ENCODE measurements at regions of chr1 and their contacts with region 1.

Region 1: DNA sequence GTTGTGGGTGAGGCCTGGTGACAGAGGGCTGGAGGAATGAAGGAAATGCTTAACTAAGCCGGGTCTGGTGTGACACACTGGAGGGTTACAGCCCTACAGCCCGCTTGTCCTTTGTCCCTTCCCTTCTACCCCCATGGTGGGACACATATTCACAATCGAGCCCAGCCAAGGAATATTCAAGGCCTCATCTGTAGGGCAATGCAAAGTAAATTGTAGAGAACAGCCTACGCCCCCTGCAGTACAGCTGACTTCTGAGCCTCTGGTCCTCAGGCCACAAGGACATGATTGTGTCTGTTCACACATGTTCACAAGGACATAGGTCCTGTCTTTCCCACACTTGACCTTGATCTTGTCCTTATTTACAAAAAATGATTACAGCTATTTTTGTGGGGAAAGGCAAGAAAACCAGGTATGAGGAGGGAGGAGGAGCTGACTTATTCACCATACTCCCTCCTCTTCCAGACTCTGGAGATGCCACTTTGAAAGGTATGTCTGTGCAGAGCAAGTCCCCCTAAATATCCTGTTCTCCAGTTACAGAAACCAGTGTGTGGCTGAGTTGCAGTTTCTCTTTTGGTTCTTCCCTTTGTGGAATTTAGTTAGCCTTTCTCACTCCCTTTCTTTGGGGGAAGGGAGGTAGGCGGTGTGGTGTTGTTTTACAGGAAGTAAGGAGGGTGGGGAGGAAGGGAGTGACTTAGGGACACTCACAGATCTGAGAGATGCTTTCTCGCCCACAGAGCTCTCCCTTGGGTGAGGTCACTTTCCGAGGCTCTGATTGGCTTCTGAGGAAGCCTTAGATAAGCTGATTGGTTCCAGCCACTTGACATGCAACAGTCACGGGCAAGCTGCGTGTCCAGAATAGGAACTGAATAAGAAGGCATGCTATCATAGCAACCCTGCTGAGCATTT is 14.6 kb downstream of the POLR3GL start:
- DNase-seq: peak; percentile 31 to 87 (median 71)
- ATAC-seq: peak; percentile 89
- H3K4me3 ChIP-seq: peak overlapping the region; percentile 64
- H3K4me3 Mint-ChIP-seq: no peak overlapping the region
- H3K27ac ChIP-seq: peak overlapping the region; percentile 82
- H3K27ac Mint-ChIP-seq: no peak overlapping the region
- H3K4me1 ChIP-seq: peaks cover 67 to 68% of the 10 kb centered on the region in 2 donors
- H3K4me1 Mint-ChIP-seq: peaks cover 12 to 37% (median 16%) of the 10 kb centered on the region in 7 donors
- H3K27me3 ChIP-seq: no peaks in the 10 kb centered on the region
- H3K27me3 Mint-ChIP-seq: no peaks in the 10 kb centered on the region

Region 2: GRCh38 chr1:145740266-145740665 is 238.8 kb before region 1 on chr1:
- CTCF ChIA-PET with region 1: no interaction called
- POLR2A ChIA-PET with region 1: no interaction called
- intact Hi-C with region 1: no loop called
- DNase-seq: no peak
- ATAC-seq: no peak
- H3K4me3 ChIP-seq: no peak overlapping the region
- H3K4me3 Mint-ChIP-seq: no peak overlapping the region
- H3K27ac ChIP-seq: no peak overlapping the region
- H3K27ac Mint-ChIP-seq: no peak overlapping the region
- H3K4me1 ChIP-seq: no peaks in the 10 kb centered on the region
- H3K4me1 Mint-ChIP-seq: no peaks in the 10 kb centered on the region
- H3K27me3 ChIP-seq: no peaks in the 10 kb centered on the region
- H3K27me3 Mint-ChIP-seq: no peaks in the 10 kb centered on the region

Region 3: GRCh38 chr1:145906954-145907753 is 72.0 kb before region 1 on chr1:
- CTCF ChIA-PET with region 1: no interaction called
- POLR2A ChIA-PET with region 1: no interaction called
- intact Hi-C with region 1: no loop called
- DNase-seq: no peak
- ATAC-seq: no peak
- H3K4me3 ChIP-seq: no peak overlapping the region
- H3K4me3 Mint-ChIP-seq: no peak overlapping the region
- H3K27ac ChIP-seq: no peak overlapping the region
- H3K27ac Mint-ChIP-seq: peak overlapping the region in 1 of 9 donors; percentile 49
- H3K4me1 ChIP-seq: no peaks in the 10 kb centered on the region
- H3K4me1 Mint-ChIP-seq: peaks cover 0 to 16% (median 5%) of the 10 kb centered on the region in 7 donors
- H3K27me3 ChIP-seq: no peaks in the 10 kb centered on the region
- H3K27me3 Mint-ChIP-seq: no peaks in the 10 kb centered on the region

Region 4: DNA sequence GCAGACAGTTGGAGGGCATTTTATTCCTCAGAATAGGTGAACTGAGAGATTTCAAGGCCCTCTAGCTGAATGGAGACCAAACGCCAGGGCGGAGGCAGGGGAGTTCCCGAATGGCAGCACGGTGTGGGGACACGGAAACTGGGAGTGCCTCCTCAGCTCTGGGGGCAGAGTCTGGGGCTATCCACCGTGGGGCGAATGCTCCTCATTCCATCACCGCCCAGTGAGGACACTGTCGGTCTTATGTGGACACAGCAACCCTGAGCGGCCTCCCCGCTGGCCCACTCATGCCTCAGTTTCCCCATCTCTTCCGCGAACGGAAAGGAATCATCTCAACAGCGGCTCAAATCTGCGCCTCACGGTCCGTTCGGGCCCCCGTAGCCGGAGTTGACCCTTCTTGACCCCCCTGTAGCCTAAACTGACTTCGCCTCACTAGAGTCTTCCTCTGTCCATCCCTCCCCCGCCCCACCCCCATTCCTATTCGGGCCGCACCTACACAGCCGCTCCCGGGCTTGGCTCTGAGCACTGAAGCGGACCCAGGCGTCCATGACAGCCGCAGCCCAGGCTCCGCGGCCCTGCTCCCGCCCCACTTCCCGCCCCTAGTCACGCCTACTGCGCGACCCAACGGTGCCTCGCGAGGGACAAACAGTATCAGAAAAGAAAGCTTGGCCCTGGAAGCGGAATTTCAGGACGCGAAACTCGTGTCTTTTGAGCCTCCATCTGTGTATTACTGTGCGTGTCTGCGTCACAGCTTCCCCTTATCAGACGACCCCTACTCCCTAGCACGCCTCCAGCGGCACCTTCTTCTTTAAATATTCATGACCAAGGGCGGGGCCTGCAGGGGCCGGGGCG is 60.7 kb before region 1 on chr1 and contains the start of gene PEX11B:
- CTCF ChIA-PET with region 1: interaction called, 3 read pairs
- POLR2A ChIA-PET with region 1: interaction called, 13 read pairs
- intact Hi-C with region 1: loop called (anchors 1 to 5 kb)
- DNase-seq: peak; percentile 80 to 95 (median 93)
- ATAC-seq: peak; percentile 94
- H3K4me3 ChIP-seq: peak within 1 kb of the TSS; percentile 82
- H3K4me3 Mint-ChIP-seq: peak within 1 kb of the TSS; percentile 92 to 98 (median 96)
- H3K27ac ChIP-seq: peak within 1 kb of the TSS; percentile 83
- H3K27ac Mint-ChIP-seq: peak within 1 kb of the TSS; percentile 93 to 98 (median 96)
- H3K4me1 ChIP-seq: peaks cover 21 to 23% of the 10 kb centered on the region in 2 donors
- H3K4me1 Mint-ChIP-seq: peaks cover 27 to 75% (median 61%) of the 10 kb centered on the region in 7 donors
- H3K27me3 ChIP-seq: no peaks in the 10 kb centered on the region
- H3K27me3 Mint-ChIP-seq: no peaks in the 10 kb centered on the region
- total RNA-seq, gene PEX11B: 16.4 to 40.4 (median 37.7) TPM

Region 5: GRCh38 chr1:145957443-145958319 is 21.4 kb before region 1 on chr1 and contains the start of gene LIX1L:
- CTCF ChIA-PET with region 1: interaction called, 11 read pairs
- POLR2A ChIA-PET with region 1: interaction called, 89 read pairs
- intact Hi-C with region 1: loop called (anchors 1 kb)
- DNase-seq: peak; percentile 79 to 97 (median 94)
- ATAC-seq: peak; percentile 95
- H3K4me3 ChIP-seq: peak within 1 kb of the TSS; percentile 70
- H3K4me3 Mint-ChIP-seq: peak within 1 kb of the TSS; percentile 88 to 99 (median 98)
- H3K27ac ChIP-seq: peak within 1 kb of the TSS; percentile 94
- H3K27ac Mint-ChIP-seq: peak within 1 kb of the TSS; percentile 87 to 98 (median 92)
- H3K4me1 ChIP-seq: peaks cover 35 to 57% of the 10 kb centered on the region in 2 donors
- H3K4me1 Mint-ChIP-seq: peaks cover 59 to 70% (median 66%) of the 10 kb centered on the region in 7 donors
- H3K27me3 ChIP-seq: no peaks in the 10 kb centered on the region
- H3K27me3 Mint-ChIP-seq: peaks cover 0 to 4% (median 0%) of the 10 kb centered on the region in 5 donors
- total RNA-seq, gene LIX1L: 31.6 to 59.2 (median 47.6) TPM

Region 6: DNA sequence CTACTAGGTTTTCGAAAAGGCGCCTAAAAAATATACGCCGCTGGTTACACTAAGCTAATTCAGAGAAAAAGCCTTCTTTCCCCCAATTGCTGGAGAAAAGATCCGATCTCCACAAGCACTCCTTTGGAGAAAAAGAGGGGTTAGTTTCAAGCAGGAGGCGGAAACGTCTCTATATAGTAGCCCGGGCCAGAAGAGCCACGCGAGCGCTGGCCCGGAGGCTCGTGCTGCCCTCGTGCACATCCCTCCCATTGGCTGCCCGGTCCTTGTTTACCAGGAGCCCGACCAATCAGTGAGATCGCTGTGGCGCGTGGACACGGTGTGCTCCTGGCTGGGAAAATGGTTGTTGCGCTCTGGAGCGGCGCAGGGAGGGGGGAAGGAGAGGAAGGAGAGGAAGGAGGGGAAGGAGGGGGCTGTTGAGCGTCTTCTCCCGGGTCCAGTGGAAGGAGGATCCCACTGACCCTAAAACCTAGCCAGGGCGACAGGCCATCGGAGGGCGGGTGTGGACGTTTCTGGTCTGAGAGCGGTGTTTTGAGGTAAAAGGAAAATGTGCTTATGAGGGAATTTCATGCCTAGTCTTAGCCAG is 17.4 kb after region 1 on chr1 and contains the start of gene TXNIP:
- CTCF ChIA-PET with region 1: interaction called, 193 read pairs
- POLR2A ChIA-PET with region 1: interaction called, 1,779 read pairs
- intact Hi-C with region 1: loop called (anchors 1 kb)
- DNase-seq: peak; percentile 66 to 97 (median 94)
- ATAC-seq: peak; percentile 92
- H3K4me3 ChIP-seq: peak within 1 kb of the TSS; percentile 97
- H3K4me3 Mint-ChIP-seq: peak within 1 kb of the TSS; percentile 89 to 99 (median 98)
- H3K27ac ChIP-seq: peak within 1 kb of the TSS; percentile 91
- H3K27ac Mint-ChIP-seq: peak within 1 kb of the TSS; percentile 94 to 99 (median 97)
- H3K4me1 ChIP-seq: peaks cover 41 to 48% of the 10 kb centered on the region in 2 donors
- H3K4me1 Mint-ChIP-seq: peaks cover 43 to 72% (median 54%) of the 10 kb centered on the region in 7 donors
- H3K27me3 ChIP-seq: no peaks in the 10 kb centered on the region
- H3K27me3 Mint-ChIP-seq: peaks cover 0 to 3% (median 0%) of the 10 kb centered on the region in 5 donors
- total RNA-seq, gene TXNIP: 498 to 1,101 (median 659) TPM

Region 7: DNA sequence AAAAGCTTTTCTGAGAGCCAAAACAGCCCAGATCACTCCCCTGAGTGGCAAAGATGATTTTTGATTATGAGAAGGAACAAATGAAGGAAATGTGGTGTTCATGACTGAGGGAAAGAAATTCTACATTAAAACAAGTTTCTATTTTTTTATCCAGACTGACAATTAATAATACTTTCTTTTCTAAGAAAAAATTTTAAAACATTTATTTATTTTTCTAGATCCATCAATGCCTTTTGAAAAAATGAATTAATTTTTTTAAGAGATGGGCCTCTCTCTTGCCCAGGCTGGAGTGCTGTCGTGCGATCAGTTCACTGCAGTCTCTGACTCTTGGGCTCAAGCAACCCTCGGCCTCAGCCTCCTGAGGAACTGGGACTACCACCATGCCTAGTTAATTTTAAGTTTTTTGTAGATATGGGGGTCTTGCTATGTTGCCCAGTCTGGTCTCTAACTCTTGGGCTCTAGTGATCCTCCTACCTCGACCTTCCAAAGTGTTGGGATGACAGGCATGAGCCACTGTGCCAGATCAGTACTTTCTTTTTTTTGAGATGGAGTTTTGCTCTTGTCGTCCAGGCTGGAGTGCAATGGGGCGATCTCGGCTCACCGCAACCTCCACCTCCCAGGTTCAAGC is 28.5 kb after region 1 on chr1:
- CTCF ChIA-PET with region 1: interaction called, 233 read pairs
- POLR2A ChIA-PET with region 1: interaction called, 1,779 read pairs
- intact Hi-C with region 1: loop called (anchors 1 kb)
- DNase-seq: peak in 1 of 9 donors; percentile 31
- ATAC-seq: no peak
- H3K4me3 ChIP-seq: no peak overlapping the region
- H3K4me3 Mint-ChIP-seq: peak overlapping the region in 9 of 10 donors; percentile 73 to 93 (median 83)
- H3K27ac ChIP-seq: peak overlapping the region; percentile 64
- H3K27ac Mint-ChIP-seq: peak overlapping the region; percentile 86 to 97 (median 93)
- H3K4me1 ChIP-seq: peaks cover 18 to 36% of the 10 kb centered on the region in 2 donors
- H3K4me1 Mint-ChIP-seq: peaks cover 31 to 56% (median 45%) of the 10 kb centered on the region in 7 donors
- H3K27me3 ChIP-seq: no peaks in the 10 kb centered on the region
- H3K27me3 Mint-ChIP-seq: no peaks in the 10 kb centered on the region

Region 8: GRCh38 chr1:146036965-146037646 is 58.0 kb after region 1 on chr1:
- CTCF ChIA-PET with region 1: interaction called, 3 read pairs
- POLR2A ChIA-PET with region 1: interaction called, 20 read pairs
- intact Hi-C with region 1: loop called in 1 of 2 experiments (anchors 1 kb)
- DNase-seq: peak; percentile 52 to 88 (median 83)
- ATAC-seq: peak; percentile 66
- H3K4me3 ChIP-seq: peak overlapping the region; percentile 87
- H3K4me3 Mint-ChIP-seq: peak overlapping the region; percentile 95 to 99 (median 97)
- H3K27ac ChIP-seq: peak overlapping the region; percentile 69
- H3K27ac Mint-ChIP-seq: peak overlapping the region; percentile 93 to 100 (median 98)
- H3K4me1 ChIP-seq: peaks cover 0 to 6% of the 10 kb centered on the region in 2 donors
- H3K4me1 Mint-ChIP-seq: peaks cover 7 to 49% (median 39%) of the 10 kb centered on the region in 7 donors
- H3K27me3 ChIP-seq: no peaks in the 10 kb centered on the region
- H3K27me3 Mint-ChIP-seq: peaks cover 0 to 32% (median 0%) of the 10 kb centered on the region in 5 donors

Region 9: GRCh38 chr1:147152772-147153171 is 1173.7 kb after region 1 on chr1:
- CTCF ChIA-PET with region 1: no interaction called
- POLR2A ChIA-PET with region 1: no interaction called
- intact Hi-C with region 1: no loop called
- DNase-seq: no peak
- ATAC-seq: no peak
- H3K4me3 ChIP-seq: no peak overlapping the region
- H3K4me3 Mint-ChIP-seq: no peak overlapping the region
- H3K27ac ChIP-seq: no peak overlapping the region
- H3K27ac Mint-ChIP-seq: no peak overlapping the region
- H3K4me1 ChIP-seq: no peaks in the 10 kb centered on the region
- H3K4me1 Mint-ChIP-seq: no peaks in the 10 kb centered on the region
- H3K27me3 ChIP-seq: no peaks in the 10 kb centered on the region
- H3K27me3 Mint-ChIP-seq: peaks cover 0 to 15% (median 0%) of the 10 kb centered on the region in 5 donors